ENCODE measurements at regions of chr6 and their contacts with region 1.

Region 1: DNA sequence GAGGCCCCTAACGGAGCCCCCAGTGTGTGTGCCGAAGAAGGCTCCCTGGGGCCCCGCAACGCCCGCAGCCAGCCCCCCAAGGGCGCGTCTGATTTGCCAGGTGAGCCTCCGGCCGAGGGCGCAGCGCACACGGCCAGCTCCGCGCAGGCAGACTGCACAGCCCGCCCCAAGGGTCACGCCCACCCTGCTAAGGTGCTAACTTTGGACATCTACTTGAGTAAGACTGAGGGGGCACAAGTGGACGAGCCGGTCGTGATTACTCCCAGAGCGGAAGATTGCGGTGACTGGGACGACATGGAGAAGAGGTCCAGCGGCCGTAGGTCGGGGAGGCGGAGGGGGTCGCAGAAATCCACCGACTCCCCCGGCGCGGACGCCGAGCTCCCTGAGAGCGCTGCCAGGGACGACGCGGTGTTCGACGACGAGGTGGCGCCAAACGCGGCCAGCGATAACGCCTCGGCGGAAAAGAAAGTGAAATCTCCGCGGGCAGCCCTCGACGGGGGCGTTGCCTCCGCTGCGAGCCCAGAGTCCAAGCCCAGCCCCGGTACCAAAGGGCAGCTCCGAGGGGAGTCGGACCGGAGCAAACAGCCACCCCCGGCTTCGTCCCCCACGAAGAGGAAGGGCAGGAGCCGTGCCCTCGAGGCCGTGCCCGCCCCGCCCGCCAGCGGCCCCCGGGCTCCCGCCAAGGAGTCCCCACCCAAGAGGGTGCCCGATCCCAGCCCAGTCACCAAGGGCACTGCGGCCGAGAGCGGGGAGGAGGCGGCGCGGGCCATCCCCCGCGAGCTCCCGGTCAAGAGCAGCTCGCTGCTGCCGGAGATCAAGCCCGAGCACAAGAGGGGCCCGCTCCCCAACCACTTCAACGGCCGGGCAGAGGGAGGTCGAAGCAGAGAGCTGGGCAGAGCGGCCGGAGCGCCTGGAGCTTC is 117.0 kb downstream of the RTN4IP1 start:
- DNase-seq: peak; percentile 68 to 69 (median 68)
- H3K4me3 ChIP-seq: peak overlapping the region; percentile 87 to 95 (median 87)
- H3K4me3 Mint-ChIP-seq: peak overlapping the region; percentile 93 to 98
- H3K27ac ChIP-seq: peak overlapping the region; percentile 94 to 97
- H3K27ac Mint-ChIP-seq: peak overlapping the region; percentile 91 to 98 (median 96)
- H3K4me1 ChIP-seq: peaks cover 58 to 68% of the 10 kb centered on the region in 2 donors
- H3K4me1 Mint-ChIP-seq: peaks cover 66% of the 10 kb centered on the region
- H3K27me3 ChIP-seq: no peaks in the 10 kb centered on the region
- H3K27me3 Mint-ChIP-seq: no peaks in the 10 kb centered on the region
- CTCF ChIP-seq: peak; percentile 55

Region 2: GRCh38 chr6:105872246-105872645 is 640.1 kb before region 1 on chr6:
- intact Hi-C with region 1: loop called in 1 of 2 experiments (anchors 10 kb)
- DNase-seq: peak; percentile 96 to 99 (median 96)
- H3K4me3 ChIP-seq: no peak overlapping the region
- H3K4me3 Mint-ChIP-seq: peak overlapping the region in 1 of 2 donors; percentile 15
- H3K27ac ChIP-seq: peak overlapping the region; percentile 12 to 91
- H3K27ac Mint-ChIP-seq: peak overlapping the region; percentile 87 to 96 (median 94)
- H3K4me1 ChIP-seq: peaks cover 66 to 74% of the 10 kb centered on the region in 2 donors
- H3K4me1 Mint-ChIP-seq: peaks cover 66% of the 10 kb centered on the region
- H3K27me3 ChIP-seq: no peaks in the 10 kb centered on the region
- H3K27me3 Mint-ChIP-seq: peaks cover 0 to 1% (median 0%) of the 10 kb centered on the region in 3 donors
- CTCF ChIP-seq: no peak

Region 3: GRCh38 chr6:106426250-106426970 is 85.9 kb before region 1 on chr6:
- intact Hi-C with region 1: no loop called
- DNase-seq: no peak
- H3K4me3 ChIP-seq: no peak overlapping the region
- H3K4me3 Mint-ChIP-seq: no peak overlapping the region
- H3K27ac ChIP-seq: no peak overlapping the region
- H3K27ac Mint-ChIP-seq: no peak overlapping the region
- H3K4me1 ChIP-seq: peaks cover 5 to 6% of the 10 kb centered on the region in 2 donors
- H3K4me1 Mint-ChIP-seq: no peaks in the 10 kb centered on the region
- H3K27me3 ChIP-seq: no peaks in the 10 kb centered on the region
- H3K27me3 Mint-ChIP-seq: peaks cover 0 to 3% (median 0%) of the 10 kb centered on the region in 3 donors
- CTCF ChIP-seq: no peak

Region 4: DNA sequence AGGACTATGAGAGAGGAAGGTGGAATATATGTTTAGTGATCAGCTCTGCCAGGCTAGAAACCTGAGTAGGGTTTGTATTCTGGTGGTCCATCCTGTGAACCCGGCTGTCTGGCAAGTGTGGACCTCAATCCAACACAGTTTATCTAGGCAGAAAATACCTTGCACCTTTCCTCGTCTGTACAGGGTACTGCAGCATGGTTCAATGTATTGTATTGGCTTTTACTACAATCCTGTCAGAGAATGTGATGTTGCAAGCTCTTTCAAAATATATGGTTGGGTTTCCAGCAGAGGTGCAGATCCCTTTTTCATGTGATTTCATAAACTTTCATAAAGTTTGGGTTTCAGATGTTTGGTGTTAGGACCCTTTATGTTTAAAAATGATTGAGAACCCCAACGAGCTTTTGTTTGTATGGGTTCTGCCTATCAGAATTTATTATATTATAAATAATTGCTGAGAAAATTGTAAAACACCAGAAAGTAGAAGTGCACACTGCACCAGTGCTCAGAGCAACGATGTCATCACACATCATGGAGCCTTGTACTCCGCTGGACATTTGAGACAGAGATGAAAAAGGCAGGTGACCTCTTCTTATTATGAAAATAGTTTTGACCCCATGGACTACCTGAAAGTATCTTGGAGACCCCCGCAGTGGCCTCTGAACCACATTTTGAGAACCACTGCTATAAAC is 10.4 kb after region 1 on chr6:
- intact Hi-C with region 1: loop called in 1 of 2 experiments (anchors 2 kb)
- DNase-seq: peak in 2 of 3 donors; percentile 64 to 69
- H3K4me3 ChIP-seq: peak overlapping the region; percentile 17 to 65 (median 55)
- H3K4me3 Mint-ChIP-seq: peak overlapping the region; percentile 29 to 94
- H3K27ac ChIP-seq: peak overlapping the region; percentile 60 to 100
- H3K27ac Mint-ChIP-seq: peak overlapping the region; percentile 97 to 100 (median 100)
- H3K4me1 ChIP-seq: peaks cover 73 to 87% of the 10 kb centered on the region in 2 donors
- H3K4me1 Mint-ChIP-seq: peaks cover 76% of the 10 kb centered on the region
- H3K27me3 ChIP-seq: no peaks in the 10 kb centered on the region
- H3K27me3 Mint-ChIP-seq: peaks cover 0 to 1% (median 0%) of the 10 kb centered on the region in 3 donors
- CTCF ChIP-seq: no peak

Region 5: DNA sequence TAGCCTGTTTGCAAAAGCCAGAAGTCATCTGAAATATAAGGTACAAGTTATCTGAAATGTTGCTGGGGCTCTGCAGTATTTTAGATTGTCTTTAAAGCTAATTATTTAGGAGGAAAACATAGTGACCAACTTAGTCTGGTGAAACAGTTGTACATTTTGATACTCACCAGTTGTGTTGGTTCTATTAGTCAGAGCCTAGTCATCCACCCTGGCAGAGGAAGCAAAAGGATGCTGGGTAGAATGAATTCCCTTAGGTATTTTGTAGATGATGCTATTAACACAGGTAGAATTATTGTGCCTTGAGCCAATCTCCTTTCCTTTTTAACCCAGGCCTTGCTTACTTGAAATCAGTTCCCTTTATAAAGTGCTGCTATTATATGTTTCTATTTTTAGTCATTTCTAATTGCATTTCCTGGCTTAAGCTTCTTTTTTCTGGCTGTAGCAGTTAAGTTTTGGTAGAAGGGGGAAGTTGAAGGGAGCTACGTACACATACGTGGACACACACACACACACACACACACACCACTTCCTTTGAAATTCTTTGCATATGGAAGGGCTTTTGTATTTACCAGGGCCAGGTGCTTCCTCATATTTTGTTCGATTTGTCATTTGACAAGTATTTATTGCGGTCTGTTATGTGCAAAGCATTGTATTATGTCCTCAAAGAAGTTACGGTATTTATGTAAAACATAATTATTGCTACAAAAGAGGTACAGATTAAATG is 34.5 kb after region 1 on chr6:
- intact Hi-C with region 1: loop called (anchors 5 kb)
- DNase-seq: peak; percentile 69 to 87 (median 80)
- H3K4me3 ChIP-seq: peak overlapping the region in 1 of 3 experiments; percentile 7
- H3K4me3 Mint-ChIP-seq: peak overlapping the region; percentile 4 to 33
- H3K27ac ChIP-seq: peak overlapping the region; percentile 88 to 94
- H3K27ac Mint-ChIP-seq: peak overlapping the region; percentile 89 to 97 (median 93)
- H3K4me1 ChIP-seq: peaks cover 55 to 64% of the 10 kb centered on the region in 2 donors
- H3K4me1 Mint-ChIP-seq: peaks cover 66% of the 10 kb centered on the region
- H3K27me3 ChIP-seq: no peaks in the 10 kb centered on the region
- H3K27me3 Mint-ChIP-seq: no peaks in the 10 kb centered on the region
- CTCF ChIP-seq: no peak

Region 6: DNA sequence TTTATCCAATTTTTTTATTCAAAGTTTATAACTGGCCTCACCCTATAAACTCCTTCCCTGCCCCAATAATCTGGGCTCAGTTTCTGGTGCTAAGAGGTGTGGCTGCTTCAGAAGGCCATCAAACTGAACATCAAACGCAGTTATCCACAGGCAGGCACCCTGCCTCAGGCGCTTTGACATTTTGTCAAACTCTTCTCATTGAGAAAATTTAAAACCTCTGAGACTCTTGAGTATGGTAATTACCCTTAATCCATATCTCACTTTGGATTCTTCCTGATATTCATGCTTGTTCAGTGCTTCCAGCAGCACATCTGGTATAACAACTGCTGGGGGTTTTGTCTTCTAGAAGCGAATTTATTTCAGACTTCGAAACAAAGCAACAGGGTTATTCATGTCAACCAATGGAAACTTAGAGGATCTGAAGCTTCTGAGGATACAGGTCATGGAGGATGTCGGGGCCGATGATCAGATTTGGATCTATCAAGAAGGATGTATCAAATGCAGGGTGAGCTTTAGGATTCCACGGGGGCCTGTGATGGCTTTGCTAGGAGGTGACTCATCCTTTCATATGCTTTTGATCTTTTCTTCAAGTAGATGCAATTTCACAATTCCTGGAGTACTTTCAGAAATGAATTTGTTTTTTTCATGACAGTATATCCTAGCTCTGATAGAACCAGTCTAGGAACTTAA is 48.8 kb after region 1 on chr6:
- intact Hi-C with region 1: loop called in 1 of 2 experiments (anchors 2 kb)
- DNase-seq: peak in 2 of 3 donors; percentile 60 to 76
- H3K4me3 ChIP-seq: peak overlapping the region in 1 of 3 experiments; percentile 53
- H3K4me3 Mint-ChIP-seq: no peak overlapping the region
- H3K27ac ChIP-seq: peak overlapping the region; percentile 41 to 84
- H3K27ac Mint-ChIP-seq: peak overlapping the region; percentile 56 to 95 (median 92)
- H3K4me1 ChIP-seq: peaks cover 36 to 45% of the 10 kb centered on the region in 2 donors
- H3K4me1 Mint-ChIP-seq: peaks cover 49% of the 10 kb centered on the region
- H3K27me3 ChIP-seq: no peaks in the 10 kb centered on the region
- H3K27me3 Mint-ChIP-seq: peaks cover 0 to 1% (median 0%) of the 10 kb centered on the region in 3 donors
- CTCF ChIP-seq: no peak

Measured in CD14-positive monocyte (primary cell).